ENCODE measurements at regions of chr7 and their contacts with region 1.

Region 1: DNA sequence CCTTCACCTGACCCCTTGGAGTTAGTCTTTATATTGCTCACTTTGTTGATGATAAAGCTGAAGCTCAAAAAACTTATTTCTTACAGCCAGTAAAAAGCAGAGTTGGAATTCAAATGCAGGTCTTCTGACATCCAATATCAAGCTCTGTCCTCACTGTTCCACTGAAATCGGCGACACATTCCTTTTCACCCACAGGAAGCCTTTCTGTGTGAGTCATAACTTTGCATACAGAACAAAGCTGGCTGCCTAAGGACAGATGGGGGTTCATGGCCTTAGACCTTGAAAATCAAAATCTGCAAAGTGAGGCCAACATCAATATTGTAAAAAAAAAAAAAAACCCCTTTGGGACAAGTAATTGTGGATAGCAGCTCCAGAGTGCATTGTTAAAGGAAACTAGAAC is 21.8 kb upstream of the AKR1B1 start:
- DNase-seq: peak; percentile 49
- H3K4me3 Mint-ChIP-seq: no peak overlapping the region
- H3K27ac Mint-ChIP-seq: peak overlapping the region; percentile 39
- H3K4me1 Mint-ChIP-seq: peaks cover 45% of the 10 kb centered on the region
- H3K27me3 Mint-ChIP-seq: no peaks in the 10 kb centered on the region
- CTCF ChIP-seq: no peak

Region 2: GRCh38 chr7:134458806-134459698 is 21.7 kb before region 1 on chr7 and contains the start of gene AKR1B1:
- CTCF ChIA-PET with region 1: interaction called, 9 read pairs
- intact Hi-C with region 1: loop called (anchors 1 kb)
- DNase-seq: peak; percentile 88
- H3K4me3 Mint-ChIP-seq: peak within 1 kb of the TSS; percentile 87
- H3K27ac Mint-ChIP-seq: peak within 1 kb of the TSS; percentile 67
- H3K4me1 Mint-ChIP-seq: peaks cover 34% of the 10 kb centered on the region
- H3K27me3 Mint-ChIP-seq: no peaks in the 10 kb centered on the region
- CTCF ChIP-seq: peak; percentile 22
- total RNA-seq, gene AKR1B1: 115 and 139 TPM in 2 replicates

Region 3: DNA sequence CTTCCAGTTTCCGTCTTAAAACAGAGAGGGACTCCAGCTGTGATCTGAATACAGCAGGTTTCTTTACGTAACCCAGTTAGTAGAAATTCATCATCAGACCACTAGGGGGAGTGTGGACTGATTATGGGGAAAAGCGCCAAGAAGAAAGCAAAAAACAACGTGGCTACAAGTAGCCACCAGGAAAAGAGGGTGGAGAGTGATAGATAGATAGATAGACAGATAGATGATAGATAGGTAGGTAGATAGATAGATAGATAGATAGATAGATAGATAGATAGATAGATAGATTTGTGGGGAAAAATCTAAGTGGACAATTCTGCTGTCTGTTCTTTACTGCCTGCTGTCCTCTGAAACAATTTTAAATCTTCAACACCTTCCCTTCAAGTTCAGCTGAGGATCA is 33.9 kb after region 1 on chr7:
- CTCF ChIA-PET with region 1: interaction called, 11 read pairs
- intact Hi-C with region 1: loop called (anchors 2 kb)
- DNase-seq: peak; percentile 66
- H3K4me3 Mint-ChIP-seq: no peak overlapping the region
- H3K27ac Mint-ChIP-seq: no peak overlapping the region
- H3K4me1 Mint-ChIP-seq: peaks cover 40% of the 10 kb centered on the region
- H3K27me3 Mint-ChIP-seq: no peaks in the 10 kb centered on the region
- CTCF ChIP-seq: peak; percentile 71

Region 4: DNA sequence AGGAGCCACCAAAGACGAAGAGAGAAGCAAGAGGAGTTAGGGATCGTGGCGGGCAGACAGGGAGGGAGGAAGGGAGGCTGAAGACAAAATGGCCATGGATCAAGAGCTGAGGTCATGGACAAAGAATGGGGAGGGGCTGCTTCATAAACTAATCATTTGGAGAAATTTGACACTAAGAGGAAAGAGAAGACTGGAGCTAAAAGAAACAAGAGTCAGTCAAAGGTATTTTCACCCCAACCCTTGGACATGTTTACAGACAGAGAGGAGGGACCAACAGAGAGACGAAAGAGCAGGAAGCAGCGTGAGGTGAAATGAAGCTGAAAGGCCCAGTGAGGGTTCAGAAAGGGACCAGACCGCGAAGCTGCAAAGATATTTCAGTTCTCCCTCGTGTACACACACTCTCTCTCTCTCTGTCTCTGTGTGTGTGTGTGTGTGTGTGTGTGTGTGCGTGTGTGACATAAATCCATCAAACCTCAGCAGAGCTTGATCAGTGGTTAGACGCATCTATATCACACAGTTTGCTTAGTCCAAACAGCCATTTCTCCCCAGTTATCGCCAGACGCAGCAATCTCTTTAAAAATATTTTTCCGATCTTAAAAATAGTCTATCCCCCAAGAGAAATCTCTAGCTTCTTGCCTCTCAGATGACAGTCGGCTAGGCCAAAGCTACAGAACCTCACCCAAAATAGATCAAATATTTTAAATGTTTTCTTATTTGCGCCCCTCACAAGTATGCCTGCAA is 286.2 kb after region 1 on chr7:
- CTCF ChIA-PET with region 1: interaction called, 13 read pairs
- intact Hi-C with region 1: no loop called
- DNase-seq: peak; percentile 21
- H3K4me3 Mint-ChIP-seq: no peak overlapping the region
- H3K27ac Mint-ChIP-seq: peak overlapping the region; percentile 1
- H3K4me1 Mint-ChIP-seq: peaks cover 23% of the 10 kb centered on the region
- H3K27me3 Mint-ChIP-seq: no peaks in the 10 kb centered on the region
- CTCF ChIP-seq: no peak

Measured in Calu3 (cell line).